Activated T-helper 1 cell treated with anti-CD3 and anti-CD28 coated beads, Interleukin-12 subunit alpha, Interleukin-12 subunit beta, Interleukin-2, Interleukin-4 antibody, amounts not matched to agents 30 ng/mL and 10 ng/mL and 1 ng/mL, durations not matched to agents 14 hours and 24 hours and 36 hours (primary cell): ENCODE measurements at regions of chr14 and their contacts with region 1.

Region 1: GRCh38 chr14:104985675-104986525 is at the start of gene CLBA1:
- DNase-seq: peak; percentile 87
- H3K4me3 Mint-ChIP-seq: peak within 1 kb of the TSS; percentile 71
- H3K27ac Mint-ChIP-seq: peak within 1 kb of the TSS; percentile 64
- H3K4me1 Mint-ChIP-seq: no peaks in the 10 kb centered on the region
- H3K27me3 Mint-ChIP-seq: peaks cover 7% of the 10 kb centered on the region
- total RNA-seq, gene CLBA1: 3.1 TPM in 2 replicates

Region 2: GRCh38 chr14:104856869-104857860 is 128.7 kb before region 1 on chr14:
- intact Hi-C with region 1: no loop called
- DNase-seq: no peak
- H3K4me3 Mint-ChIP-seq: no peak overlapping the region
- H3K27ac Mint-ChIP-seq: no peak overlapping the region
- H3K4me1 Mint-ChIP-seq: no peaks in the 10 kb centered on the region
- H3K27me3 Mint-ChIP-seq: peaks cover 7% of the 10 kb centered on the region

Region 3: GRCh38 chr14:104973300-104974145 is 12.4 kb before region 1 on chr14:
- intact Hi-C with region 1: no loop called
- DNase-seq: no peak
- H3K4me3 Mint-ChIP-seq: no peak overlapping the region
- H3K27ac Mint-ChIP-seq: no peak overlapping the region
- H3K4me1 Mint-ChIP-seq: peaks cover 11% of the 10 kb centered on the region
- H3K27me3 Mint-ChIP-seq: peaks cover 11% of the 10 kb centered on the region

Region 4: GRCh38 chr14:105026803-105027563 is 41.1 kb after region 1 on chr14:
- intact Hi-C with region 1: loop called (anchors 1 kb)
- DNase-seq: no peak
- H3K4me3 Mint-ChIP-seq: peak overlapping the region; percentile 5
- H3K27ac Mint-ChIP-seq: peak overlapping the region; percentile 59
- H3K4me1 Mint-ChIP-seq: peaks cover 43% of the 10 kb centered on the region
- H3K27me3 Mint-ChIP-seq: peaks cover 4% of the 10 kb centered on the region